Endothelial cell of umbilical vein (primary cell): ENCODE measurements at regions of chr19 and their contacts with region 1.

Region 1: GRCh38 chr19:34220472-34221063 is 33.8 kb upstream of the GARRE1 start:
- DNase-seq: peak; percentile 71
- H3K4me3 ChIP-seq: no peak overlapping the region
- H3K27ac ChIP-seq: no peak overlapping the region
- H3K4me1 ChIP-seq: peaks cover 21% of the 10 kb centered on the region
- H3K27me3 ChIP-seq: no peaks in the 10 kb centered on the region
- CTCF ChIP-seq: peak; percentile 72 to 76
- POLR2A ChIP-seq: no peak

Region 2: DNA sequence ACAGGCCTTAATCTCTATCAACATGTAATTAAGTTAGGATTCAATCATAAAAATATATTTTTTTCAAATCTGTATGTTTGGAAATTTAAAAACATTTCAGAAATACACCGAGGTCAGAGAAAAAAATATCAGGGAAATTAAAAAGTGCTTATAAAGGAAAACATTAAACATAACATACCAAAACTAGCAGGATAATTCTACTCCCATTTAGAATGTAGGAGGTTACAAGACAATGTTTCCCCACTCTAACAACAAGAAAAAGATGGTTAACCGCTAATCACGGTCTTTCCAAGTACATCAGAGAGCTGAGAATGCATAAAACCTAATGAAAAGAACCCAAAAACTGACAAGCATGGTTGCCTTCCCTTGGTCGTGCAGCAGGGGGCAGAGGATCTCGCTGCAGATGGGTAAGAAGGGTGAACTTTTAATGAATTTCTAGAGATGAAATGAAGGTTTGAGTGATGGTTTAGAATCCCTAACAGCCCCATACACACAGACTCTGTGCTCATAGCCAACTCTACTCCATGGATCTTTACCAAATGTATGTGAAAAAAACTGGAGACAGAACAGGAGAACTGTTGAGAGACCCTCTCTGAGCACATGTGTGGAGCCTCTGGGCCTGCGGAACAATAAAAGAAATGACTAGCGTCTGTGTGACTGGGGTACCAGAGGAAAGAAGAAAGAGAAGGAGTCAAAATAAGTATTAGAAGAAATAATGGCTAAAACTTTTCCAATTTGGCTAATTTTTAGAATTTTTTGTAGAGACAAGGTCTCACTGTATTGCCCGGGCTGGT is 99.5 kb before region 1 on chr19:
- CTCF ChIA-PET with region 1: interaction called, 4 read pairs
- POLR2A ChIA-PET with region 1: no interaction called
- dilution Hi-C with region 1: no loop called
- intact Hi-C with region 1: loop called (anchors 5 kb)
- DNase-seq: peak; percentile 65
- H3K4me3 ChIP-seq: no peak overlapping the region
- H3K27ac ChIP-seq: no peak overlapping the region
- H3K4me1 ChIP-seq: no peaks in the 10 kb centered on the region
- H3K27me3 ChIP-seq: peaks cover 3 to 7% of the 10 kb centered on the region in 2 experiments
- CTCF ChIP-seq: peak; percentile 78 to 79
- POLR2A ChIP-seq: no peak

Region 3: GRCh38 chr19:34232566-34233481 is 12.3 kb after region 1 on chr19:
- CTCF ChIA-PET with region 1: interaction called, 12 read pairs
- POLR2A ChIA-PET with region 1: no interaction called
- dilution Hi-C with region 1: no loop called
- intact Hi-C with region 1: no loop called
- DNase-seq: peak; percentile 87
- H3K4me3 ChIP-seq: no peak overlapping the region
- H3K27ac ChIP-seq: peak overlapping the region; percentile 45
- H3K4me1 ChIP-seq: peaks cover 29% of the 10 kb centered on the region
- H3K27me3 ChIP-seq: no peaks in the 10 kb centered on the region
- CTCF ChIP-seq: no peak
- POLR2A ChIP-seq: no peak

Region 4: GRCh38 chr19:34336781-34337271 is 116.3 kb after region 1 on chr19:
- CTCF ChIA-PET with region 1: interaction called, 8 read pairs
- POLR2A ChIA-PET with region 1: interaction called, 3 read pairs
- dilution Hi-C with region 1: no loop called
- intact Hi-C with region 1: loop called (anchors 1 kb)
- DNase-seq: peak; percentile 68
- H3K4me3 ChIP-seq: no peak overlapping the region
- H3K27ac ChIP-seq: peak overlapping the region; percentile 4
- H3K4me1 ChIP-seq: peaks cover 28% of the 10 kb centered on the region
- H3K27me3 ChIP-seq: no peaks in the 10 kb centered on the region
- CTCF ChIP-seq: peak; percentile 40 to 43
- POLR2A ChIP-seq: no peak

Region 5: DNA sequence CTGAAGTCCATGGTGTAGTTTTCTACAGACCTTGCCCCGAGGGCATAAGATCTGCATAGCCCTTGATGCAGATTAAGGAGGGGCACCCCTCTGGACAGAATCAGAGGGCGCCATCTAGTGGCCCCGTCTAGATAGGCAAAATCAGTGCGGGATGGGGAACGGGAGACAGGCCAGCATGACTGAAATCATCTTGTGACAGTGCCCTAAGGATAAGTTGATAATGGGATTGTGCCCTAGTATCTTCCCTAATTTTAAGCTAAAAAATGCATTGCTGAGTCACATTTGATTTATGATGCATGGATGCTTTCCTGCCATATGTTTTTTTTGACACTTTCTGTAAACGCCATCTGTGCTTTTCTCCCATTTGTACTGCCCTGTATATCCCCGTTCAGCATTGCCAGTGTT is 125.4 kb after region 1 on chr19:
- CTCF ChIA-PET with region 1: interaction called, 18 read pairs
- POLR2A ChIA-PET with region 1: no interaction called
- dilution Hi-C with region 1: no loop called
- intact Hi-C with region 1: loop called (anchors 1 kb)
- DNase-seq: peak; percentile 77
- H3K4me3 ChIP-seq: no peak overlapping the region
- H3K27ac ChIP-seq: no peak overlapping the region
- H3K4me1 ChIP-seq: no peaks in the 10 kb centered on the region
- H3K27me3 ChIP-seq: no peaks in the 10 kb centered on the region
- CTCF ChIP-seq: peak; percentile 85 to 95
- POLR2A ChIP-seq: no peak

Region 6: GRCh38 chr19:34428549-34429285 is 208.1 kb after region 1 on chr19:
- CTCF ChIA-PET with region 1: no interaction called
- POLR2A ChIA-PET with region 1: no interaction called
- dilution Hi-C with region 1: no loop called
- intact Hi-C with region 1: loop called (anchors 10 kb)
- DNase-seq: peak; percentile 41
- H3K4me3 ChIP-seq: peak overlapping the region; percentile 85 to 93 (median 86)
- H3K27ac ChIP-seq: peak overlapping the region; percentile 59
- H3K4me1 ChIP-seq: peaks cover 27% of the 10 kb centered on the region
- H3K27me3 ChIP-seq: no peaks in the 10 kb centered on the region
- CTCF ChIP-seq: no peak
- POLR2A ChIP-seq: no peak